ENCODE measurements at regions of chr4 and their contacts with region 1.

Region 1: DNA sequence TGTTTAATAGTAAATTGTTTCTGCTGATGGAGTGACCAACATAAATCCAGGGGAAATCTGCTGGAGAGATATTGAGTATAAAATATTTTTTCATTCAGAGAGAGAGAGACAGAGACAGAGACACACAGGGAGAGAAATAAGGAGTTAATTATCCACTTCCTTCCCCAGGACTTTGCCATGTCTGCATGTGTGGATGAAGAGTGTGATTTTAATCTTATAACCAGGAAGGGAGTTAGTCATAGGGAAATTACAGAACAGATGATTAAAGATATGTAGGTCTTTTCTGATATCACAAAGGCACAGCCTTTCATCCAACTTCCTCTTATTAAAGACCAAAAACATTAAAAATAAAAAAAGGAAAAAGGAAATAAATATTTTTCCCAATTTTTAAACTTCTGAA is 526.3 kb downstream of the SPRY1 start:
- DNase-seq: peak; percentile 91
- H3K4me3 ChIP-seq: no peak overlapping the region
- H3K27ac ChIP-seq: peak overlapping the region; percentile 93
- H3K4me1 ChIP-seq: peaks cover 20% of the 10 kb centered on the region
- H3K27me3 ChIP-seq: no peaks in the 10 kb centered on the region
- CTCF ChIP-seq: no peak
- POLR2A ChIP-seq: peak; percentile 78

Region 2: DNA sequence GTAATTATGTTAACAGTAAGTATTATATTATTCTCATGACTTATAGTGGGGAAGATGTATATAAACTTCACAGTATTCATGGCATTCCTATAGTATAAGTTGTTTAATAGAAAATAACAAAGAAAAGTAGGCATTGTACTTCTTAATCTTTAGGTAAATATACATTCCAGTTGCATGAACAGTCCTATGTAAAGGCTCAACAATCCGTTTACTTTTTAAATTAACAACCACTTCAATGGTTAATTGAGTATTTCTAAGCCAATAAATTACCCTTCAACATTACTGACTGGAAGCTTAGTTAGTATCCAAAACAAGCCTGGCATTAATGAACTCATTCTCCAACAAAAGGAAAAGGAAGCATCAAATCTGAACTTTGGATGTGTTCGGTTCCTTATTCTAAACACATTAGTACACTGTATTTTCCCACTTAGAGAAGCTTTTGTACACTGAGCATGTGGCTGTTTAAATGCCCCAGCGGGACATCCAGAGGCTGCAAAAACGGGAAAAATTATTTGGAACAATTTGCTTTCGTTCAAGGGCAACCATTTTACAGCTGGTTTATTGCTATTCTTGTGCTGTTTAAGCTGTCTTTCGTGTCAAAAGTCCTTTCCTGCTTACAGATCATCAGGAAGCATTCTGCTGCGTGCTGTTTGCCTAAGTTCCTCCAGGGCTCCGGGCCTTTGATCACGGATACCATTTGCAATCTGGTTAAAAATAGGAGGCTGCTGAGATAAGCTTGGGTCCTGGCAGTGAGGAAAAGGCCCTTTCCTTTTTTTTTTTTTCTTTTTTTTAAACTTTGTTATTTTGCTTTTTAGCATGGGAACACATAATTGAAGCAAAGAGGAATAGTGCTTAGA is 65.9 kb before region 1 on chr4:
- CTCF ChIA-PET with region 1: no interaction called
- POLR2A ChIA-PET with region 1: interaction called, 7 read pairs
- dilution Hi-C with region 1: no loop called
- intact Hi-C with region 1: loop called (anchors 2 kb)
- DNase-seq: peak; percentile 90
- H3K4me3 ChIP-seq: peak overlapping the region in 1 of 3 experiments; percentile 36
- H3K27ac ChIP-seq: peak overlapping the region; percentile 82
- H3K4me1 ChIP-seq: peaks cover 20% of the 10 kb centered on the region
- H3K27me3 ChIP-seq: no peaks in the 10 kb centered on the region
- CTCF ChIP-seq: peak in 1 of 2 donors; percentile 28
- POLR2A ChIP-seq: no peak

Region 3: DNA sequence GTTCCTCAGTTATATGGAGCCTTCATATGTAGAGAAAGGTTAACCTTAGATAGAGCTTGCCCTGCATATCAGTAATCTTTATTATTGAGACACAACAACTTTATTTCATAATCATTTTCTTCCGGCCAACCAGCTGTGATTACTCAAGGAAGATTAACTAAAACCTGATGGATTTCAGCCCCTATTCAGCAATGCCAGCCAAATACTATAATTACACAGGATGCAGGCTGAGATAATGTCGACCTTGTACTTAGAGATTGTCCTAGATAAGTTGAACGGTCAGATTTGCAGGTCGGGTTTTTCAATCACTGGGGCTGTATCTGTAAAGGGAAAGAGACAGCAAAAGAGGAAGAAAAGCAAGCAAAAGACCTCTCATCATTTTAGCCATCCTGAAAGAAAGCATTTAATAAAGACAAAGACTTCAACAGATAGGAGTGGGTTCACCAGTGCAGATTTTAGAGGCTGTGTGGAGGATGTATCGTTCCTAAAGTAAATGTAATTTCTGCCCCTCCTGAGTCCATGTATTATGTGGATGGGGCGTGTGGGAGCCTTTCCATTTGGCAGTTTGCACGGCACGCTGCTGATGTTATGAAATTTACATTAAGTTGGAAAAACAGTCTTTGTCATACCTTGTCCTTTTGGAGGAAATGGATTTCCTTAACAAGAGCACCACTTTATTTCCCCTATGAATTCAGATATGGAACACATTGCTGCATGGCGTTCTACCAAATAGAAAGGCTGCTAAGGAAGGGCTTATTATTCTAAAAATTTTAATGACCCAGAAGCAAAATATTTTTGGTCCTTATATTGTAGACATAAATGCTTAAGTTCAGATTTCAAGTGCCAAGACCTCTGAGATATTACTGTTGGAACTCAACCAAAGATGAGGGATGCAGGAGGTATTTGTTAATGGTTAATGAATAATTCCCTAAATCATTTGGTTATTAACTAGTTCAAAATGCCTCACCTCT is 29.6 kb before region 1 on chr4:
- CTCF ChIA-PET with region 1: no interaction called
- POLR2A ChIA-PET with region 1: no interaction called
- dilution Hi-C with region 1: no loop called
- intact Hi-C with region 1: loop called (anchors 1 kb)
- DNase-seq: peak; percentile 87
- H3K4me3 ChIP-seq: peak overlapping the region in 1 of 3 experiments; percentile 26
- H3K27ac ChIP-seq: peak overlapping the region; percentile 96
- H3K4me1 ChIP-seq: peaks cover 69% of the 10 kb centered on the region
- H3K27me3 ChIP-seq: no peaks in the 10 kb centered on the region
- CTCF ChIP-seq: no peak
- POLR2A ChIP-seq: peak; percentile 43

Region 4: DNA sequence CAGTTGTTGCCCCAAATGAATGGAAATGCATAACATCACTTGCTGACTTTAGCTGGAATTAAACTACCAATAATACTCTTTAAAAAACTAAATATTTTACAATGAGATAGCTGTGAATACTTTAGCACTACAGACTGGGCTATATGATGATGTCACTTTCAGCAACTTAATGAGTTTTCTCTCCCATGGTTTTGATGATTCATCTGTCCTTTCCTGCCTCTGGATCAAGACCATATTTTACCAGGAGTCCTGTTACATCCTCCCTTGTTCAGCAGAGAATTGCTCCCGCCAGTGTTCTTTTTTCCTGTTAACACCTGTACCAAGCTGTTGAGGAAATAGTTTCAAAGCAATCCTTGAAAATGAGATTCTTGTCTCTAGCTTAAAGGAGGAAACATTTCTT is 16.8 kb after region 1 on chr4:
- CTCF ChIA-PET with region 1: interaction called, 3 read pairs
- POLR2A ChIA-PET with region 1: no interaction called
- dilution Hi-C with region 1: no loop called
- intact Hi-C with region 1: loop called (anchors 1 kb)
- DNase-seq: peak; percentile 86
- H3K4me3 ChIP-seq: no peak overlapping the region
- H3K27ac ChIP-seq: peak overlapping the region; percentile 79
- H3K4me1 ChIP-seq: peaks cover 35% of the 10 kb centered on the region
- H3K27me3 ChIP-seq: no peaks in the 10 kb centered on the region
- CTCF ChIP-seq: no peak
- POLR2A ChIP-seq: no peak

Region 5: DNA sequence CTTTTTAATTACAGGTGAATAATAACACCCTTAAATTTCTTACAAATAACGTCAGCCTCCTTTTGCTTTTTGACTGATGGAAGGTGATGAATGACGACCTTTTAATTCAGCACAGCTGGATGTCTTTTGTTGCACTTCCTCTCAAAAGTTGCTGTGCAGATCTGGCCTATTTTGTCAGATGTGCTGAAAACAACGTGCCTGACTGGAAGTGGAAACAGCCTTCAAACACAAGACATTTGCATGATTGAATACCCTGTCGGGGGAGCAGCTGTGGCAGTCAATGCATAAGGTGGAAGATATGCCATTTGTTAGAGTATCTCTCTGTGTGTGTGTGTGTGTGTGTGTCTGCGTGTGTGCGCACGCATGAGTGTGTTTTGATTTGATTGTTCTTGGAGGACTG is 53.4 kb after region 1 on chr4:
- CTCF ChIA-PET with region 1: no interaction called
- POLR2A ChIA-PET with region 1: no interaction called
- dilution Hi-C with region 1: no loop called
- intact Hi-C with region 1: loop called (anchors 1 kb)
- DNase-seq: peak; percentile 90
- H3K4me3 ChIP-seq: no peak overlapping the region
- H3K27ac ChIP-seq: peak overlapping the region; percentile 70
- H3K4me1 ChIP-seq: peaks cover 30% of the 10 kb centered on the region
- H3K27me3 ChIP-seq: no peaks in the 10 kb centered on the region
- CTCF ChIP-seq: no peak
- POLR2A ChIP-seq: no peak

Region 6: GRCh38 chr4:124060261-124060918 is 137.5 kb after region 1 on chr4:
- CTCF ChIA-PET with region 1: no interaction called
- POLR2A ChIA-PET with region 1: no interaction called
- dilution Hi-C with region 1: no loop called
- intact Hi-C with region 1: loop called (anchors 2 kb)
- DNase-seq: peak; percentile 90
- H3K4me3 ChIP-seq: peak overlapping the region in 1 of 3 experiments; percentile 3
- H3K27ac ChIP-seq: peak overlapping the region; percentile 39
- H3K4me1 ChIP-seq: peaks cover 19% of the 10 kb centered on the region
- H3K27me3 ChIP-seq: no peaks in the 10 kb centered on the region
- CTCF ChIP-seq: no peak
- POLR2A ChIP-seq: no peak

Measured in endothelial cell of umbilical vein (primary cell).